Heart right ventricle (tissue), 16 donors: ENCODE measurements at regions of chr13 and their contacts with region 1.

Region 1: GRCh38 chr13:109136873-109137272 is 507.5 kb downstream of the MYO16 start:
- DNase-seq: no peak
- ATAC-seq: no peak
- H3K4me3 ChIP-seq: no peak overlapping the region
- H3K27ac ChIP-seq: no peak overlapping the region
- H3K4me1 ChIP-seq: peaks cover 0 to 5% (median 0%) of the 10 kb centered on the region in 9 donors
- H3K27me3 ChIP-seq: peaks cover 6 to 26% (median 22%) of the 10 kb centered on the region in 7 donors
- CTCF ChIP-seq: no peak

Region 2: GRCh38 chr13:109058082-109058481 is 78.8 kb before region 1 on chr13:
- intact Hi-C with region 1: loop called in 1 of 10 experiments (anchors 1 kb)
- DNase-seq: no peak
- ATAC-seq: no peak
- H3K4me3 ChIP-seq: no peak overlapping the region
- H3K27ac ChIP-seq: no peak overlapping the region
- H3K4me1 ChIP-seq: no peaks in the 10 kb centered on the region
- H3K27me3 ChIP-seq: peaks cover 0 to 5% (median 0%) of the 10 kb centered on the region in 7 donors
- CTCF ChIP-seq: no peak

Region 3: DNA sequence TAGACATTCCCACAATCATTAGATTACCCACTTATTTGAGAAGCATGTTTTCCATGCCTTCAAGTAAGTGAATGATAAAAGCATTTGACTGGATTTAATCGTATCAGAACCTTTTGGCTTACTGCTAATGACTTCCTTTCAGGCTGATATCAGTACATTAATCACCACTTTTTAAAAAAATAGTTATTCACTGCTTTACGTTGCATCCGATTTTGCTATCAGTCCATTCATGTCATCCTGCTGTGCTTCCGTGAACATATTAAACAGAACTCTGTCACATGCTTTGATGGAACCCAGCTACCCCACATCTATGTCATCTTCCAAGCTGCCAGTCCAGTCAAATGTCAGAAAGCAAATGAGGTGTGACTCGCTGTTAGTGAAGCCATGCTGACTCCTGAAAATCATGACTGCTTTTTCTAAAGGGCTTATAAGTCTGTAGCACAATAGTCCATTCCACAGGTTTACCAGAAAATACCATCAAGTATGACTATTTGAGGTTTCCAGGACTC is 208.6 kb after region 1 on chr13:
- intact Hi-C with region 1: no loop called
- DNase-seq: no peak
- ATAC-seq: no peak
- H3K4me3 ChIP-seq: no peak overlapping the region
- H3K27ac ChIP-seq: no peak overlapping the region
- H3K4me1 ChIP-seq: no peaks in the 10 kb centered on the region
- H3K27me3 ChIP-seq: peaks cover 0 to 10% (median 0%) of the 10 kb centered on the region in 7 donors
- CTCF ChIP-seq: no peak